Breast epithelium (tissue), 4 donors: ENCODE measurements at regions of chr14 and their contacts with region 1.

Region 1: GRCh38 chr14:69673578-69674305 is 62.3 kb downstream of the SUSD6 start:
- DNase-seq: no peak
- H3K4me3 ChIP-seq: peak overlapping the region in 1 of 3 donors; percentile 14
- H3K27ac ChIP-seq: peak overlapping the region; percentile 75 to 79
- H3K4me1 ChIP-seq: peaks cover 13 to 23% of the 10 kb centered on the region in 2 donors
- H3K27me3 ChIP-seq: no peaks in the 10 kb centered on the region
- CTCF ChIP-seq: no peak
- POLR2A ChIP-seq: no peak

Region 2: DNA sequence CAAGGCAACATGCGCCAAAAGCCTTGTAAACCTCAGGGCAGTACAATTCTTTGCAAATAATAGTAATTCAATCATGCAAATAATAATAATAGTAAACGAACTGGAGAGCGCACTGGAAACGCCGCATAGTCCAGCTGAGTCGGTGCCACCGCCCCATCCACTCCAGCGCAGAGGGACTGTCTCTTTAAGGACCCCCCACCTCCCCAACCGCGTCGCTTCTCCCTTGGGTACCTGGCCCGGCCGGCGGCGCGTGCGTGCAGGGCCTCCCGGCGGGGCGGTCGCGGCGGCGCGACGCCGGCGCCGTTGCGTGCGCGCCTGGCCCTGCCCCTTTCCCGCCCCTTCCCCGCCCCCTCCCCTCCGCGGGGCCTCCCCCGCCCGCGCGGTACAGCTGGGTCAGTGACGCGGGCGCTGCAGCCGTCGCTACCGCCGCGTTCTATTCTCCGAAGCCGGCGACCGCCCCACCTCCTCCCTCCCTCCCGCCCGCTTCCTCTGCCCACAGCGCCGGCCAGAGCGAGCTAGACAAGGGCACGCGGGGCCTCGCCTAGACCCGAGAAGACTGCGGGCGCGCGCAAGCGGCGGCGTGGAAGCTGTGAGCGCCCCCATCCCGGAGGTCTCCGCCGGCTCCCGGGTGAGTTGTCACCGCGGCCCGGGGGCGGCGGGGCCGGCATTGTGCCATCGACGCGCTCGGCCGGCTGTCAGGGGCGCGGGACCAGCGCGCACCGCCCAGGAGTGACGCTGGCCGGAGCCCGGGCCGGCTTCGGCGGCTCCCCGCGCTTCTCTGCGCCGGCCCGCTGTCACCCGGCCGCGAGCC is 62.3 kb before region 1 on chr14 and contains the start of gene SUSD6:
- intact Hi-C with region 1: loop called (anchors 10 kb)
- DNase-seq: peak; percentile 88 to 89
- H3K4me3 ChIP-seq: peak within 1 kb of the TSS; percentile 89 to 98 (median 90)
- H3K27ac ChIP-seq: peak within 1 kb of the TSS; percentile 97 to 99
- H3K4me1 ChIP-seq: peaks cover 4 to 27% of the 10 kb centered on the region in 2 donors
- H3K27me3 ChIP-seq: no peaks in the 10 kb centered on the region
- CTCF ChIP-seq: peak in 1 of 3 donors; percentile 7
- POLR2A ChIP-seq: no peak
- total RNA-seq, gene SUSD6: 30.2 to 55.9 (median 55.7) TPM

Region 3: DNA sequence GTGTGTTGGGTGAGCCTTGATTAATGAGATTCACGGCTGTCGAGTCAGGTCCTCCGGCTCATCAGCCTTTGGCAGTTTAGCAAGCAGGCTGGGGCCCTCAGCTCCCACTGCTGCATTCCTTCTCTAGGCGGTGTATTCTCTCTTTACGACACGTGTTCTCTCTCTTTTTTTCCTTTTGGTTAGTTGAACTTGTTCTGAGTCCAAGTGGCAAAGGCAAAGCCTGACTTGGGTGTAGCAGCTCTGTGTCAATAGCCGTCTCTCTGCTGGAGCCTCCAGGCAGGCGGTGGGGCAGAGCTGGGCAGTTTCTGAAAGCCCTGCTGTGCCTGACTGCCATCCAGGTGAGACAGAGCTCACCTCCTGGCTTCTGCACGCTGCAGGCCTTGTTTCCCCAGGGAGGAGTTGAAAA is 15.8 kb before region 1 on chr14:
- intact Hi-C with region 1: no loop called
- DNase-seq: peak; percentile 80 to 83
- H3K4me3 ChIP-seq: peak overlapping the region in 2 of 3 donors; percentile 25 to 49
- H3K27ac ChIP-seq: peak overlapping the region; percentile 89 to 90
- H3K4me1 ChIP-seq: peaks cover 6 to 55% of the 10 kb centered on the region in 2 donors
- H3K27me3 ChIP-seq: no peaks in the 10 kb centered on the region
- CTCF ChIP-seq: no peak
- POLR2A ChIP-seq: no peak